ENCODE measurements at regions of chr16 and their contacts with region 1.

Region 1: DNA sequence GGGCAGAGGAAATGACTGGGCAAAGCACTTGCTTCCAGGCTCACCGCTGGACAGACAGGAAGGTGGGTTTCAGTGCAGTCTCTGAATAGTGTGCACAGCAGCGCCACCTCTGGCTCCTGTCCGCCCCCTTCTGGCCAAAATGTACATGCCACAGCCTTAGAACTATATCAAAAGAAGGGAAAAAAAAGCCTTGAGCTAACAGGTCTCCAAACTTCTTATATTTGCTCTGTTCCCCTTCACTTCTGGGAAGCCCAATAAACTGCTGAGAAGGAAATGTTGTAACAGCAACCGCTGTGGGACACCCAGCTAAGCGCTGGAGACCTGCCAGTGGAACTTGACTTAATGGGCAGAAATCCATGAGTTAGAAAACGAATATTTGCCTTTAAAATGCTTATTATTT is 17.5 kb downstream of the COG7 start:
- DNase-seq: peak; percentile 34
- H3K4me3 ChIP-seq: no peak overlapping the region
- H3K27ac ChIP-seq: no peak overlapping the region
- H3K4me1 ChIP-seq: no peaks in the 10 kb centered on the region
- H3K27me3 ChIP-seq: no peaks in the 10 kb centered on the region
- CTCF ChIP-seq: peak; percentile 87 to 97

Region 2: DNA sequence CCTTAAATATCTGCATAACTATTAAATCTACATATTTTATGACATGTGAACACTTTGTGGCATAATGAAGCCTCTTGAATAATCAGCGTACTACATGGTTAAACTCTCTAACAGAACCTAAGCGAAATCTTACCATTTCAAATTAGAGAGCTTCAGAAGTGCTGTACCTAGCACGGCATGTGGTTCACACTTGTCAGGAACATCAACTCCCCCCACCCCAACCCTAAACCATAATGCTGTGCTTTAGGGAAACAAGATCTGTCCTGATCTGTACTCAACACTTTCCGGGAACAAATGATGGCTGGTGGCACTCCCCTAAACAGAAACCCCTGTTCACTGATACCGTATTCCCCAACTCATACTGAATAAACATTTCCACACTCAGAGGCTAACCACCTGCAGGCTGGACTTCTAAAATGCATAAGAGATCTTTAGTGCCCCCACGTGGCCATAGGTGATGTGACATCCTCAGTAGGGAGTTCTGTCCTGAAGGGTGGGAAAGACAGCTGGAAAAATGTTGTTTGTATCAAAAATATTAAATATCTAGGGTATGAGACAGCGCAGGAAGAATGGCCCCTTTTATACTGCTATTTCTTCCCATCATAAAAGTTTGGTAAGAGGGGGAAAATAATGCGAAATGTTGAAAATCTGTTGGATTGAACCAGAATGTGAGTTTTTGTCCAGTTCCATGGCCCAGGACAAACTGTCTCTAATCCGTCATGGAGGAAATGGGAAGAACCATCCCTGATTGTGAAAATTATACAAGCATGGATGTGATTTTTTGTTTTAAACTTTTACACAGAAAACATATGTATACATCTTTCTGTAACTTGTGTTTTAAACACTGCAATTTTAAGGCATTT is 374.8 kb before region 1 on chr16:
- CTCF ChIA-PET with region 1: no interaction called
- dilution Hi-C with region 1: no loop called
- in situ Hi-C with region 1: no loop called
- intact Hi-C with region 1: loop called (anchors 2 kb)
- DNase-seq: peak; percentile 57
- H3K4me3 ChIP-seq: no peak overlapping the region
- H3K27ac ChIP-seq: no peak overlapping the region
- H3K4me1 ChIP-seq: peaks cover 7% of the 10 kb centered on the region
- H3K27me3 ChIP-seq: no peaks in the 10 kb centered on the region
- CTCF ChIP-seq: peak; percentile 83 to 90

Region 3: DNA sequence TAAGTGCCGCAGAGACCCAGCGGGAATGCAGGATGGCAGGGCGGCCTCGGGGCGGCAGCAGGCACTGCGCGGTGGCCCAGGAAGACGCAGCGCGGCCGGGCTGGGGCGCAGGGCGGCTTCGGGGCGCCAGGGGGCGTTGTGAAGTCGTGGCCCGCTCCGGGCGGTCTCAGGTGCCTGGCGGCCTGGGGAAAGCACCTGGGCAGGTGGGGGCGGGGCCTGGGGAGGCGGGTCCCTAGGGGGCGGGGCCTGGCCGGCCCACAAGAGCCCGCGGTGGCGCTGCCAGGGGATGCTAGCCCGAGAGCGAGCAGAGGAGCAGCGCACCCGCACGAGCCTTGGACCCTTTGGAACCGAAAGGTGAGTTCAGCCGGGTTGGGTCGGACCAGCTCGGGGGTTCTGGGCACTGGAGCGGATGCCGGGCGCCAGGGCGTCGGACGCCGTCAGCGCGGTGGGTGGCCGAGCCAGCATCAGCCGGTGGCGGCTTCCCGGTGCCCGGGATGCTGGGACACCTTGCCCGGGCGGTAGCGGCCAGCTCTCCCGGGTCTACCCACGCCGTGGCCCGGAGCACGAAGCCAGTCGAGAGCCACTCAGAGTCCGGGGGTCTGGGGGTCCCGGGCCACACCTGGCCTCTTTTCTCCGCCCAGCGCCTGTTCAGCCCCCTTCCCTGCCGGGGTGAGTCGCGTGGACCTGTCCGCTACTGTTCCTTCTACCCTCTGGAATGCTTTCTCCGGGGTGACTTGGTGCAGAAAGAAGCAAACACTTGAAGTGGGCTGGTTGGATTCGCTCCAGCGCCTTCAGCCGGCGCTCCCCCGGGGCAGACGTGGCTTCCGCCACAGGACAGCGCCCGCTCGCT is 252.8 kb before region 1 on chr16 and contains the start of gene SCNN1G:
- CTCF ChIA-PET with region 1: interaction called, 7 read pairs
- dilution Hi-C with region 1: no loop called
- in situ Hi-C with region 1: loop called (anchors 5 kb)
- intact Hi-C with region 1: loop called (anchors 1 kb)
- DNase-seq: peak; percentile 88
- H3K4me3 ChIP-seq: peak within 1 kb of the TSS; percentile 68 to 87 (median 69)
- H3K27ac ChIP-seq: no peak within 1 kb of the TSS
- H3K4me1 ChIP-seq: peaks cover 14% of the 10 kb centered on the region
- H3K27me3 ChIP-seq: no peaks in the 10 kb centered on the region
- CTCF ChIP-seq: peak; percentile 94 to 97
- total RNA-seq, gene SCNN1G: 1.2 to 4.7 TPM

Region 4: DNA sequence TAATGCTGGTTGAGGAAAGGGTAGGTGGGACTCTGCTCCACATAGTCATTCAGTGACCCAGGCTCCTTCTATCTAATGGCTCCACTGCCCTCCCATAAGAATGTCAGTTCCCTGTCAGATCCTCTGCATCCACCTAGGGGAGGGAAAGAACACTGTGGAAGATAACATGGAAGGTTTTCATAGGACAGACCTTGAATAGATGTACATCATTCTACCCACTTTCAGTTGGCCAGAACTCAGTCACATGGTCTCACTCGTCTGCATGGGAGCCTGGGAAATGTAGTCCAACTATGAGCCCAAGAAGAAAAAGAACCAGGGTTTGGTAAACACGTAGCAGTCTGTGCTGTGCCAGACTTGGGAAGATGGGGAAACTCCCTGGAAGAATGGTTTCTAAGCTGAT is 160.5 kb before region 1 on chr16:
- CTCF ChIA-PET with region 1: interaction called, 11 read pairs
- dilution Hi-C with region 1: no loop called
- in situ Hi-C with region 1: loop called in 1 of 2 experiments (anchors 10 kb)
- intact Hi-C with region 1: no loop called
- DNase-seq: peak; percentile 40
- H3K4me3 ChIP-seq: no peak overlapping the region
- H3K27ac ChIP-seq: no peak overlapping the region
- H3K4me1 ChIP-seq: peaks cover 16% of the 10 kb centered on the region
- H3K27me3 ChIP-seq: no peaks in the 10 kb centered on the region
- CTCF ChIP-seq: no peak

Region 5: DNA sequence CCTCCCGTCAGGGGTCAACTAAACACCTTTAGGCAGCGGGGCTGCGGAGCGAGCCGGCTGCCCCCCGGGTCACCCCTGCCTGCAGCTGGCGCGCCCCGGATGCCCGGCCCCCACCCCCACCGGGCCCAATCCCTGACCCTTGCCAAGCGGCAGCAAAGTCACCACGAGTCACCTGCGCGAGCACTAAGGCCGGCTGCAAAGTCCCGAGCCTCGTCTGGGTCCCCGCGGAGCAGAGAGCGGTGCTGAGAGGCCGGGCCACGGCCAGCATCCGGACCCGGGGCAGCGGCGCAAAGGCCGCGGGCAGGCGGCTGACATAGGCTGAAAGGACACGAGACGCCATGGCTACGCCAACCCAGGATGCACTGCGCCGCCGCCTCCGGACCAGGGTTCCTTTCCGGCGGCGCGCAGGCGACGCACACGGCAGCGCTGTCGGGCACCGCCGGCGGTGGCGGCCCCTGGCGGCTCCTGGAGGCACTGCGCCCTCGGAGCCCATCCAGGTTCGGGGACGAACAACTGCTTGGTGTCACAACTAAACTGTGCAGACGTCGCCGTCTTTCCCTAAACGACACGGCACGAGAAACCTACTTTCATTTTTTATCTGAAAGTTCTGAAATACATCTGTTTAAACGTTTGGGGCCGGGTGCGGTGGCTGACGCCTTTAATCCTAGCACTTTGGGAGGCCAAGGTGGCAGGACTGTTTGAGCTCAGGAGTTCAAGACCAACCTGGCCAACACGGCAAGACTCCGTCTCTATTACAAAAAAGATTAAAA is 160.6 kb after region 1 on chr16 and contains the start of gene NDUFAB1:
- CTCF ChIA-PET with region 1: no interaction called
- dilution Hi-C with region 1: no loop called
- in situ Hi-C with region 1: no loop called
- intact Hi-C with region 1: loop called (anchors 5 kb)
- DNase-seq: peak; percentile 85
- H3K4me3 ChIP-seq: peak within 1 kb of the TSS; percentile 86 to 96 (median 88)
- H3K27ac ChIP-seq: peak within 1 kb of the TSS; percentile 60
- H3K4me1 ChIP-seq: peaks cover 7% of the 10 kb centered on the region
- H3K27me3 ChIP-seq: no peaks in the 10 kb centered on the region
- CTCF ChIP-seq: peak; percentile 90 to 94
- total RNA-seq, gene NDUFAB1: 70.2 to 86.6 TPM

Measured in mammary epithelial cell (primary cell).